ENCODE measurements at regions of chr18 and their contacts with region 1.

Region 1: DNA sequence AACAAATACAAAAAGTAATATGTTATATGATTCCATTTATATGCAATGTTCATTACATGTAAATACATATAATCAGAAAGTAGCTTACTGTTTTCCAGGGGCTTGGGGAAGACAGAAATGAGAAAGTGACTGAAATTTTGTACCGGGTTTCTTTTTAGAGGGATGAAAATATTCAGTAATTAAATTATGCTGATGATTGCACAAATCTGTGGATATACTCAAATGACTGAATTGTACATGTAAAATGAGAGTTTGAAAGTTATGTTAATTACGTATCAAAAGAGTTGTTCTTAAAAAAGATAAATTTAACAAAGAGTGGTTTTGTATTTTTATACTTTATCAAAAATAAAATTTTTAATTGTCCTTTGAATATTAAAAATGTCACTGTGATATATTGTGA is 856.3 kb downstream of the DSC3 start:
- DNase-seq: no peak
- ATAC-seq: no peak
- H3K4me3 ChIP-seq: no peak overlapping the region
- H3K27ac ChIP-seq: no peak overlapping the region
- H3K4me1 ChIP-seq: no peaks in the 10 kb centered on the region
- H3K27me3 ChIP-seq: no peaks in the 10 kb centered on the region
- CTCF ChIP-seq: no peak
- EP300 ChIP-seq: no peak
- POLR2A ChIP-seq: no peak
- RAD21 ChIP-seq: no peak

Region 2: DNA sequence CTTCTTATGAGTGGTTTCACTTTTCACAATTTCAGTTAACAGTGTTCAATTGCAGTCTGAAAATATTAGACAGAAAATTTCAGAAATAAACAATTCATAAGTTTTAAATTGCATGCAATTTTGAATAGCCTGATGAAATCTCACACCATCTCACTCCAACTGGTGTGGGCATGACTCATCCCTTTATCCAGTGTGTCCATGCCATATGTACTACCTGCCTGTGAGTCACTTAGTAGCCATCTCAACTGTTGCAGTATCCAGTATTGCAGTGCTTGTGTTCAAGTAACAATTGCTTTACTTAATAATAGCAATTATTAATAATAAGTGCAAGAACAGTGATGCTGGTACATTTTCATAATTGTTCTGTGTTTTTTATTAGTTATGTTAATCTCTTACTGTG is 346.1 kb before region 1 on chr18:
- CTCF ChIA-PET with region 1: no interaction called
- POLR2A ChIA-PET with region 1: no interaction called
- RAD21 ChIA-PET with region 1: no interaction called
- SMC1A ChIA-PET with region 1: no interaction called
- in situ Hi-C with region 1: no loop called
- intact Hi-C with region 1: no loop called
- DNase-seq: no peak
- ATAC-seq: no peak
- H3K4me3 ChIP-seq: no peak overlapping the region
- H3K27ac ChIP-seq: no peak overlapping the region
- H3K4me1 ChIP-seq: no peaks in the 10 kb centered on the region
- H3K27me3 ChIP-seq: no peaks in the 10 kb centered on the region
- CTCF ChIP-seq: no peak
- EP300 ChIP-seq: no peak
- POLR2A ChIP-seq: no peak
- RAD21 ChIP-seq: no peak

Region 3: DNA sequence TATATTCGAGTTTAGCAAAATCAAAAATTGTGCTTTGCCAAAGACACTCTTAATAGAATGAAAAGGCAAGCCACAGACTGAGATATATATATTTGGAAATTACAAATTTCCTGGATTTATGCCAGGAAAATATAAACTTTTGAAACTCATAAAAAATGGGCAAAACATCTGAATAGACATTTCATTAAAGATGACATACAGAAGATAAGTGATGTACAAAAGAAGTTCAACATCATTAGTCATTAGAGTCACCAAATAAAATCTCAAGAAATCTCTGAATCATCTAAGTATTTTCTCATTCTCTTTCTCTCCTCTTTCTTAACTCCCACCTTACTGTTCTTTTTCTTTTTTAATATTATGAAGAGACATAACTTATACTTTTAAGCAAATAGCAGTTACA is 64.8 kb before region 1 on chr18:
- CTCF ChIA-PET with region 1: no interaction called
- POLR2A ChIA-PET with region 1: no interaction called
- RAD21 ChIA-PET with region 1: no interaction called
- SMC1A ChIA-PET with region 1: no interaction called
- in situ Hi-C with region 1: no loop called
- intact Hi-C with region 1: loop called (anchors 10 kb)
- DNase-seq: no peak
- ATAC-seq: no peak
- H3K4me3 ChIP-seq: no peak overlapping the region
- H3K27ac ChIP-seq: no peak overlapping the region
- H3K4me1 ChIP-seq: no peaks in the 10 kb centered on the region
- H3K27me3 ChIP-seq: no peaks in the 10 kb centered on the region
- CTCF ChIP-seq: no peak
- EP300 ChIP-seq: no peak
- POLR2A ChIP-seq: no peak
- RAD21 ChIP-seq: no peak

Region 4: GRCh38 chr18:30163573-30163972 is 22.7 kb before region 1 on chr18:
- CTCF ChIA-PET with region 1: no interaction called
- POLR2A ChIA-PET with region 1: no interaction called
- RAD21 ChIA-PET with region 1: no interaction called
- SMC1A ChIA-PET with region 1: no interaction called
- in situ Hi-C with region 1: no loop called
- intact Hi-C with region 1: no loop called
- DNase-seq: no peak
- ATAC-seq: no peak
- H3K4me3 ChIP-seq: no peak overlapping the region
- H3K27ac ChIP-seq: no peak overlapping the region
- H3K4me1 ChIP-seq: no peaks in the 10 kb centered on the region
- H3K27me3 ChIP-seq: no peaks in the 10 kb centered on the region
- CTCF ChIP-seq: no peak
- EP300 ChIP-seq: no peak
- POLR2A ChIP-seq: no peak
- RAD21 ChIP-seq: no peak